WTC11 (cell line): ENCODE measurements at regions of chr19 and their contacts with region 1.

Region 1: DNA sequence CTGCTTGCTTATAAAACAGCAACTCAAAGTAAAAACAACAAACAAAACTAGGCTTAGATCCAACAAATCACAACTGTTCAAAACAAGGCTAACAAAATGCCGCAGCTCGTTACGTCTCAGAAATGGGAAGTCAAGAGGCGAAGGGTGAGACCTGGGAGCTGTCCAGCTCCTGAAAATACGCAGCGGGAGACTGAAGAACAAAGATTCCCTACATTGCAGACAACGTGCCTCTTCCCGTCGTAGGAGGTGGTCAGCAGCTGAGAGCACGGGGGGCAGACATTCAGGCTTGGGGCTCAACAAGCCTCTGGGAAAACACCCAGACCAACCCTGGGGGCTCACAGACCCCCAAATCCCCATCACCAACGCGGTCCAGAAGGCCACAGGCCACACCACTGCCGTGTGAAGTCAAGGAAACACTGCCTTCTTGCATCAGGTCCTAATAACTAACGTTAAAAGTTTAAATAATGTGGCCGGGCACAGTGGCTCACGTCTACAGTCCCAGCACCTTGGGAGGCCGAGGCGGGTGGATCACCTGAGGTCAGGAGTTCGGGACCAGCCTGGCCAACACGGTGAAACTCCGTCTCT is 13.5 kb downstream of the PLPP2 start:
- DNase-seq: peak; percentile 61
- ATAC-seq: peak; percentile 75
- H3K4me3 Mint-ChIP-seq: no peak overlapping the region
- H3K27ac Mint-ChIP-seq: 0 out of 2 replicates have a peak overlapping the region, but pooled peaks have one; percentile 31
- H3K4me1 Mint-ChIP-seq: peaks cover 21% of the 10 kb centered on the region
- H3K27me3 Mint-ChIP-seq: no peaks in the 10 kb centered on the region; the same call in 1 of the 2 replicates
- CTCF ChIP-seq: no peak

Region 2: GRCh38 chr19:262125-262524 is 15.5 kb before region 1 on chr19:
- CTCF ChIA-PET with region 1: interaction called, 10 read pairs
- POLR2A ChIA-PET with region 1: no interaction called
- DNase-seq: no peak
- ATAC-seq: no peak
- H3K4me3 Mint-ChIP-seq: no peak overlapping the region
- H3K27ac Mint-ChIP-seq: no peak overlapping the region
- H3K4me1 Mint-ChIP-seq: 0 out of 2 replicates have a peak, but pooled peaks cover 4% of the 10 kb centered on the region
- H3K27me3 Mint-ChIP-seq: peaks cover 29% of the 10 kb centered on the region
- CTCF ChIP-seq: no peak

Region 3: DNA sequence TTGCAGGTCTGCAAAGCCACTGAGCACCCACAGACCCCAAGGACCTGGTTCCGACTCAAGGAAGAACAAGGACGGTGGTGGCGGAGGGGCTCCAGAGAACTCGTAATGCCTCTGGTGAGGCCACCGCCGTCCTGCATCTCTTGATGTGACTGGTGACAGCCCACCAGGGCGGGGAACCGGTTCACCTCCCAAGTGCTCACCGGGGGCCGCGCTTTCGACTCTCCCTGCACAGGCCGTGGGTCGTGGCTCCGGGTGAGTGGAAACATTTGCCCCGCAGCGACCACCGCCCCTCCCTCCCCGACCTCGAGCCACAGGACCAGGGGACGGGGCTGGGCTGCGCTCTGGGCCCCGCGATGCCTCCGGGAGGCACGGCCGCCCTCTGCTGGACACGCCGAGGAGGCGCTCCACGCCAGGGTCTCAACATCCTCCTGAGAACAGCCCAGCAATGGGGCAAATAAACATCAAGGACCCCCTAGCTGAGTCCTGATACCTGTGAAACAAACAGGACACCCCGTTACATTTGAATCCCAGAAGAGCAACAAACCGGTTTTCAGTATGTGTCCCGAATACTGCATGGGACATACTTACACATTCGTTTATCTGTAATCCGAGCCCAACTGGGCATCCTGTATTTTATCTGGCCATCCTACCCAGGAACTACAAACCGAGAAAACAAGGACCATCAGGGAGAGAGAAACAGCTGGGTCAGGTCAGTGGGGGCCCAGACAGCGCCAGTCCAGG is 17.4 kb after region 1 on chr19:
- CTCF ChIA-PET with region 1: interaction called, 10 read pairs
- POLR2A ChIA-PET with region 1: no interaction called
- DNase-seq: peak; percentile 79
- ATAC-seq: peak; percentile 75
- H3K4me3 Mint-ChIP-seq: peak overlapping the region; percentile 52
- H3K27ac Mint-ChIP-seq: peak overlapping the region; percentile 36; the same call in 1 of the 2 replicates
- H3K4me1 Mint-ChIP-seq: peaks cover 26% of the 10 kb centered on the region
- H3K27me3 Mint-ChIP-seq: peaks cover 13% of the 10 kb centered on the region
- CTCF ChIP-seq: peak; percentile 77; the same call in 1 of the 2 replicates

Region 4: DNA sequence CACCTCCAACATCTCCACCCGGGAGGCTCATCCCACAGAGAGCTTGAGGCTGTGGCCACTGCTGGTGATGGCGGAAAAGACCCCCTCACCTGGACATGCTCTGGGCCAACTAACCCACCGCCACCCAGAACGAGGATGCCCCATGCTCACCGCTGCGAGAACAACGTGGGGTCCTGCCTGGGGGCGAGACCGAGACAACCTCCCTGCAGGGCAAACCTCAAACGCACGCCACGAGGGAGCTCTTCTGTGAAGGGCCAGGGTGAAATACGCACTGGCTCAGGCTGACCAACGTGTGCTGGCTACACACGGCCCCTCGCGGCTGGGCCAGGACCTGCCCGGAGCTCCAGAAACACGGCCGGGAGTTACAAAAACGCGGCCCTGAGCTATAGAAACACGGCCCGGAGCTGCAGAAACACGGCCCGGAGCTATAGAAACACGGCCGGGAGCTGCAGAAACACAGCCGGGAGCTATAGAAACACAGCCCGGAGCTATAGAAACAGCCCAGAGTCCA is 32.5 kb after region 1 on chr19:
- CTCF ChIA-PET with region 1: no interaction called
- POLR2A ChIA-PET with region 1: no interaction called
- DNase-seq: no peak
- ATAC-seq: peak; percentile 61
- H3K4me3 Mint-ChIP-seq: no peak overlapping the region
- H3K27ac Mint-ChIP-seq: no peak overlapping the region
- H3K4me1 Mint-ChIP-seq: no peaks in the 10 kb centered on the region
- H3K27me3 Mint-ChIP-seq: no peaks in the 10 kb centered on the region
- CTCF ChIP-seq: no peak